Activated CD4-positive, alpha-beta memory T cell treated with anti-CD3 and anti-CD28 coated beads for 36 hours (primary cell): ENCODE measurements at regions of chr1 and their contacts with region 1.

Region 1: GRCh38 chr1:59699227-59699847 is 115.4 kb upstream of the HOOK1 start:
- DNase-seq: peak; percentile 13
- H3K4me3 Mint-ChIP-seq: no peak overlapping the region
- H3K27ac Mint-ChIP-seq: no peak overlapping the region
- H3K4me1 Mint-ChIP-seq: peaks cover 17% of the 10 kb centered on the region
- H3K27me3 Mint-ChIP-seq: no peaks in the 10 kb centered on the region

Region 2: GRCh38 chr1:58739856-58740466 is 959.4 kb before region 1 on chr1:
- CTCF ChIA-PET with region 1: interaction called, 74 read pairs
- POLR2A ChIA-PET with region 1: no interaction called
- intact Hi-C with region 1: loop called (anchors 1 kb)
- DNase-seq: no peak
- H3K4me3 Mint-ChIP-seq: no peak overlapping the region
- H3K27ac Mint-ChIP-seq: no peak overlapping the region
- H3K4me1 Mint-ChIP-seq: no peaks in the 10 kb centered on the region
- H3K27me3 Mint-ChIP-seq: no peaks in the 10 kb centered on the region

Region 3: DNA sequence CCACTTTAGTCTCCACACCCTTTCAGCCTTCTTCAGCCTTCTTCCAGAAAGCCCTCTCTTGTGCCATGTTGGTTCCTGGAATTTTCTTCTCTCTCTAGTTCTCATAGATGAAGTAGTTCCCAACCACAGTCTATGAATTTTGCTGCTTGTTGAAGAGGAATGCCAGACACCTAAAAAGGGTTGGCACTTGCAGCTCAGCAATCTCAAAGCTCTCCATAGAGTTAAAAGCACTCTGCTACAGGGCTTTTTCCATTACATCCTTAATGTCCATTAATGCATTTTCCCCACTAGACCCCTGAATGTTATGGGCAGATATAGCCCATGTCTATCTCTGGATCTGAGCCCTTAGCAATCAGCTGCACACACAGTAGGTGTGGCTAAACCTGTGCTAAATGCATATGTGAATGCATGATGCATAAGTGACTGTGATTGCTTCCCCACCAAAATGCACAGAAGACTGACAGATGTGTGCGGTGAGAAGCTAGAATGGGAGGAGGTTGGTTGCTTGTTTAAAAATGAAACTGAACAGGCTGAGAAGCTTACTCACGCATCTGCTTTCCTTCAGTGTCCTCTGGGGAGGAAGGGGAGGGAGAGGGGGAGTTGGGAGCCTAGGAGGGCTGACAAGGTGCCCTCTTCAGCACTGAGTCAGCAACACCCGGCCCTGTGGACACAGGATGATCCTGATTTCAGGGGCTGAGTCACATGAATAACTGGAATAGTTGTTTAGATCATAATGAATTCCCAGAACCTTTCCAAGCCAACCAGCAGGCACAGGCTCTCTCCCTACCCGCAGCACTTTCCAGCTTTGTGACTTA is 548.6 kb before region 1 on chr1:
- CTCF ChIA-PET with region 1: interaction called, 6 read pairs
- POLR2A ChIA-PET with region 1: no interaction called
- intact Hi-C with region 1: loop called (anchors 10 kb)
- DNase-seq: peak; percentile 37
- H3K4me3 Mint-ChIP-seq: no peak overlapping the region
- H3K27ac Mint-ChIP-seq: no peak overlapping the region
- H3K4me1 Mint-ChIP-seq: peaks cover 16% of the 10 kb centered on the region
- H3K27me3 Mint-ChIP-seq: no peaks in the 10 kb centered on the region

Region 4: GRCh38 chr1:59432531-59433439 is 266.6 kb before region 1 on chr1:
- CTCF ChIA-PET with region 1: no interaction called
- POLR2A ChIA-PET with region 1: no interaction called
- intact Hi-C with region 1: no loop called
- DNase-seq: peak; percentile 15
- H3K4me3 Mint-ChIP-seq: no peak overlapping the region
- H3K27ac Mint-ChIP-seq: peak overlapping the region; percentile 19
- H3K4me1 Mint-ChIP-seq: peaks cover 27% of the 10 kb centered on the region
- H3K27me3 Mint-ChIP-seq: no peaks in the 10 kb centered on the region

Region 5: GRCh38 chr1:59494145-59494833 is 205.0 kb before region 1 on chr1:
- CTCF ChIA-PET with region 1: no interaction called
- POLR2A ChIA-PET with region 1: no interaction called
- intact Hi-C with region 1: no loop called
- DNase-seq: no peak
- H3K4me3 Mint-ChIP-seq: no peak overlapping the region
- H3K27ac Mint-ChIP-seq: no peak overlapping the region
- H3K4me1 Mint-ChIP-seq: no peaks in the 10 kb centered on the region
- H3K27me3 Mint-ChIP-seq: peaks cover 3% of the 10 kb centered on the region

Region 6: DNA sequence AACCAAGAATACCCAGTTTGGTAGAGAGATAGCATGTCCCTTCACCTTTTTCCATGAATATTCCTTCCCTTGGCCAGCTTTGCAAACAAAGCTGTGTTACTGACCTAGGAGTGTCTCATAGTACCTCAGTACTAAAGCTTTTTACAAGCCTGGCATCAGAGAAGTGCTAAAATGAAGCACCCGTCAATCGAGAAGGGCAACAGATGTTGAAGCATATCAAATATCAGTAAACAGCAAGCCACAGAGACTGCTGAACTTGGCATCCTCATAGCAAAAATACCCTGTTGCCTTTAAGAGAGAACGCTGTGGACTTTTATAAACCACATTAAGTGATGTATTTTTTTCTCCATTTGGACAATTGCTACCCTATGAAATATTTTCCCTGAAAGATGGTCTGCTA is 13.2 kb before region 1 on chr1:
- CTCF ChIA-PET with region 1: interaction called, 19 read pairs
- POLR2A ChIA-PET with region 1: no interaction called
- intact Hi-C with region 1: no loop called
- DNase-seq: no peak
- H3K4me3 Mint-ChIP-seq: no peak overlapping the region
- H3K27ac Mint-ChIP-seq: no peak overlapping the region
- H3K4me1 Mint-ChIP-seq: no peaks in the 10 kb centered on the region
- H3K27me3 Mint-ChIP-seq: no peaks in the 10 kb centered on the region

Region 7: GRCh38 chr1:59759156-59759925 is 60.0 kb after region 1 on chr1:
- CTCF ChIA-PET with region 1: interaction called, 19 read pairs
- POLR2A ChIA-PET with region 1: no interaction called
- intact Hi-C with region 1: loop called (anchors 2 kb)
- DNase-seq: peak; percentile 81
- H3K4me3 Mint-ChIP-seq: peak overlapping the region; percentile 40
- H3K27ac Mint-ChIP-seq: no peak overlapping the region
- H3K4me1 Mint-ChIP-seq: peaks cover 4% of the 10 kb centered on the region
- H3K27me3 Mint-ChIP-seq: no peaks in the 10 kb centered on the region

Region 8: GRCh38 chr1:59892841-59893811 is 193.8 kb after region 1 on chr1:
- CTCF ChIA-PET with region 1: no interaction called
- POLR2A ChIA-PET with region 1: no interaction called
- intact Hi-C with region 1: no loop called
- DNase-seq: no peak
- H3K4me3 Mint-ChIP-seq: no peak overlapping the region
- H3K27ac Mint-ChIP-seq: no peak overlapping the region
- H3K4me1 Mint-ChIP-seq: peaks cover 9% of the 10 kb centered on the region
- H3K27me3 Mint-ChIP-seq: peaks cover 1% of the 10 kb centered on the region